Posterior vena cava (tissue), 2 donors: ENCODE measurements at regions of chr9 and their contacts with region 1.

Region 1: GRCh38 chr9:131334629-131335367 is 45.3 kb downstream of the PLPP7 start:
- DNase-seq: peak; percentile 83

Region 2: DNA sequence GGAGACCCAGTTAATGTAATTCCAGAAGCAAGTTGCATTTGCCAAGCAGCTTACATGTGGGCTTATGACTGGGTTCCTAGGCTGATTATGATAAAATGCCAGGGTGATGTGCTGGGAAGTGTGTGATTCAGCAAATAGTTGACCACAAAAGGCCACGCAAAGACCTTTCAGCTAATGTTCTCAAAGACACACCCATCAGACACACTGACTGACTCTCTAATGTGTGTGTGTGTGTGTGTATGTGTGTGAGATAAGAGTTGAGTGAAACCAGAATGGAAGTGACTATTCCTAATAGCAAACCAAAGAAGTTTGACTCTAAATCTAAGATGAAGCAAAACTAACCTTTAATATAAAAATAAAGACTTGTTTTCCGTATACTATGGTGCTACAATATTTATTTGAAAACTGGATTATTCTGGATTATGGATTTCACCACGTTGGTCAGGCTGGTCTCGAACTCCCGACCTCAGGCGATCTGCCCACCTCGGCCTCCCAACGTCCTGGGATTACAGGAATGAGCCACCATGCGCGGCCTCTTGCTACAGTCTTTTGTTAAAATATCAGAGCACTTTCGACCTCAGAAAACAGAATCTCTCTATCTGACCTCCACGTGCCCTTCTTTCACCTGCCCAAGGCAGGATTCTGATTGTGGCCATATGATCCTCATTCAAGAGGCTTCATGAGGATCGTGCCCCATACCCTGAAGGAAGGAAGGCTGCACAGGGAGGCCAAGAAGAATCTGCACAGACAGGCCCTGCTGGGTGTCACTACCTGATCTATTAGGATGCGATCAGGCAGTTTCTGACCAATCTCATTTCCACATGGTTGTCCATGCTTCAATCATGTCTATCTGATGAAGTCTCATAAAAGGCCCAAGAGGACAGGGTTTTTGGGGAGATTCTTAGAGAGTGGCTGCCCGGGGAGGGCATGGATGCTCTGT is 1423.9 kb before region 1 on chr9:
- intact Hi-C with region 1: no loop called
- DNase-seq: no peak

Region 3: GRCh38 chr9:130893341-130894101 is 441.3 kb before region 1 on chr9:
- intact Hi-C with region 1: no loop called
- DNase-seq: no peak

Region 4: DNA sequence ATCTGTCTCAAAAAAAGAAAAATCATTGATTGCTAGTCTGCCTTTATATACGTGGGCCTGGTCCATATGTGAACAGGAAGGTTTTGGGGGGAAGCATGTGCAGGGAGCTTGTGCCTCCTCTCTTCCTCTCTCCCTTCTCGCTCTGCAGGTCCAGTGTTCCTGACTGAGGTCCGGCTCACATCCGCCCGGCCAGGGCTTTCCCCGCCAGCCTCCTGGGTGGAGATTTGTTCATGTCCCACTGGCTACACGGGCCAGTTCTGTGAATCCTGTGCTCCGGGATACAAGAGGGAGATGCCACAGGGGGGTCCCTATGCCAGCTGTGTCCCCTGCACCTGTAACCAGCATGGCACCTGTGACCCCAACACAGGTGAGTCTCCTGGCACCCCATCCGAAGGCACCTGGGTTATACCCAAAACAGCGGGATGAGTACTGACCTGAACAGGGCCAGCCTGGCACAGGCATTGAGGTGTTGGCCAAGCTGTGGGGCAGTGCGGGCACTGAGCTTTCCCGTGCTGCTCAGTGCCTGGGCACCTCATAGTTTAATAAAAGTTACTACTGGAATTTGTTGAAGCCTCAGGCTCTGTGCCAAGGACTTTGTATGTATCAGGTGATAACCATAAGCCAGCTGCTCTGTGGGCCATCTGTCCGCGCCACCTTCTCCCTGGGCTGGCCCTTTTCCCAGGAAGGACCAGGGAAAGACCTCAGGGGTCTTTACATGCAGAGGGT is 277.9 kb before region 1 on chr9:
- intact Hi-C with region 1: loop called in 1 of 2 experiments (anchors 5 kb)
- DNase-seq: peak; percentile 75

Region 5: GRCh38 chr9:131178382-131178781 is 156.4 kb before region 1 on chr9:
- intact Hi-C with region 1: loop called (anchors 2 to 10 kb)
- DNase-seq: peak; percentile 85